Psoas muscle (tissue), 8 donors: ENCODE measurements at regions of chr13 and their contacts with region 1.

Region 1: GRCh38 chr13:44075113-44075512 is 195.4 kb downstream of the LACC1 start:
- DNase-seq: no peak
- ATAC-seq: peak in 2 of 4 donors; percentile 57 to 66
- H3K4me3 ChIP-seq: no peak overlapping the region
- H3K27ac ChIP-seq: no peak overlapping the region
- H3K4me1 ChIP-seq: no peaks in the 10 kb centered on the region
- H3K27me3 ChIP-seq: no peaks in the 10 kb centered on the region
- CTCF ChIP-seq: no peak

Region 2: GRCh38 chr13:44116562-44117332 is 41.6 kb after region 1 on chr13:
- intact Hi-C with region 1: loop called in 1 of 2 experiments (anchors 5 kb)
- DNase-seq: no peak
- ATAC-seq: peak; percentile 85 to 95 (median 92)
- H3K4me3 ChIP-seq: peak overlapping the region; percentile 13
- H3K27ac ChIP-seq: peak overlapping the region; percentile 70
- H3K4me1 ChIP-seq: peaks cover 23% of the 10 kb centered on the region
- H3K27me3 ChIP-seq: no peaks in the 10 kb centered on the region
- CTCF ChIP-seq: no peak

Region 3: DNA sequence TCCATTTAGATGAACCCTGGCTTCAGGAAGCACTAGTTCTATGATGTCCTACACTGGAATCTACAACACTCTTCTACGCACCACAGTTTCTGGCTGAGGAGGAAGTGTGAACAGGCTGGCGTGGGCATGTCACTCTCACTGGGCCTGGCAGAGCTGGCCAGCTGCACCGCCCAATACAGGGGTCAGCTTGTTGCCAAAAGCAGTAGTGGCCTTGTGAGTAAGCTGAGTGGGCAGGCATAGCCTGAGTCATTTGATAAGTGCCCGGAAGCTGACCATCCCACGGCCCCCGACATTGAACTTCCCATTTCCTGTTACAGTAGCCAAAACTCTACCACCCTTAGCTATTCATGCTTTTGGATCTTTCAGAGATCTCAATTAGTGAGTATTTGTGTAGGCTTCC is 57.6 kb after region 1 on chr13:
- intact Hi-C with region 1: no loop called
- DNase-seq: peak; percentile 75 to 85
- ATAC-seq: peak; percentile 78 to 92 (median 84)
- H3K4me3 ChIP-seq: no peak overlapping the region
- H3K27ac ChIP-seq: peak overlapping the region; percentile 71
- H3K4me1 ChIP-seq: peaks cover 15% of the 10 kb centered on the region
- H3K27me3 ChIP-seq: no peaks in the 10 kb centered on the region
- CTCF ChIP-seq: no peak